ENCODE measurements at regions of chr19 and their contacts with region 1.

Region 1: DNA sequence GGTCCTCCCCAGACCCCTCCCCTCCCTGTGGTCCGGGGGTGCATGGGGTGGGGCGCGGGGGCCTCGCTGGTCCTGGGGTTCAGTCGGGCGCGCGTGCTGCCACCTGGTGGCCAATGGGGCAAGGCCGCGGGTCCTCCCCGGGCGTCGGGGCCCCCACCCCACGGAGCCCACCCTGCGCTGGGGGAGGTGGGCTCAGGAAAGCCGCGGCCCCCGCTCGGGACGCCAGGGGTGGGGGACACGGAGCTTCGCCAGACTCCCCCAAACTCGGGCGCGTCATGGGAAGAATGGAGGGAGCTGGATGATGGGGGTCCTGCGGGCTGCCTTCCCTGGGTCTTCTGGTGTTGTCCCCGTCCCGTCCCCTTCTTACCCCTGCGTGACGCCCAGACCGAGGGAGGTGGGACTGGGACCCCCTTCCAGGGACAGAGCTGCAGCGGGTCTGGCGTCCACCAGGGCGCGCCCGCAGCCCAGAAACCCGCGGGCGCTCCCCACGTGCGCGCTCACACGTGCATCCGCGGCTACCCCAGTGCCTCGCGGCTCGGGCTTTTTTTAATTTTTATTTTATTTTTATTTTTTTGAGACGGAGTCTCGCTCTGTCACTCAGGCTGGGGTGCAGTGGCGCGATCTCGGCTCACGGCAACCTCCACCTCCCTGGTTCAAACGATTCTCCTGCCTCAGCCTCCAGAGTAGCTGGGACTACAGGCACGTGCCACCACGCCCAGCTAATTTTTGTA is 19.8 kb upstream of the TCF3 start:
- DNase-seq: peak; percentile 75
- ATAC-seq: peak; percentile 20
- H3K4me3 ChIP-seq: peak overlapping the region in 4 of 5 experiments; percentile 43 to 64 (median 54)
- H3K4me3 Mint-ChIP-seq: peak overlapping the region; percentile 81
- H3K27ac ChIP-seq: no peak overlapping the region
- H3K27ac Mint-ChIP-seq: peak overlapping the region; percentile 59
- H3K4me1 ChIP-seq: peaks cover 28 to 54% of the 10 kb centered on the region in 2 donors
- H3K4me1 Mint-ChIP-seq: peaks cover 37% of the 10 kb centered on the region
- H3K27me3 ChIP-seq: peaks cover 0 to 41% (median 27%) of the 10 kb centered on the region in 4 experiments
- H3K27me3 Mint-ChIP-seq: peaks cover 24% of the 10 kb centered on the region
- CTCF ChIP-seq: peak; percentile 93

Region 2: DNA sequence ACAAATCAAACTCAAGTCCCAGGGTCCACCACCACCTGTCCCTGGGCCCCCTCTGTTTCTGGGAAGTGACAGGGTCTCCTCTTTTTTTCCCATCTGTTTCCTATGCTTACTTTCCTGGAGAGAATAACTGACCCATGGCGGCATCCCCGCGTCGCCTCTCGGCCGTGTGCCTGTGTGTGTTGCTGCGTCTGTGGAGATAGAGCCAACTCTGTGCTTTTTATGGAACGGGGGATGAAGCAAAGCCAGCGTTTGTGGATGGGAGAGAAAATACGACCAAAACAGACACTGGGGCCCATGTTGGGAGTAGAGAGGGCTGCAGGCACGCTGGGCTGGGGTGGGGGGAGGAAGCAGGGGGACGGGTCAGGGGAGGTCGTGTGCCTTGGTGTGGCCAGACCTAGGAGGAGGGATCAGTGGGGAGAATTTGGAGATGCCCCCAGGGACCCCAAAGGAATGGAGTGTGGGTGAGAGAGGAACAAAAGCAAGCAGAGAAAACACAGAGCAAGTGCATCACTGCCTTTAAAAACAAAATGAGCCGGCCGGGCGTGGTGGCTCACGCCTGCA is 131.8 kb before region 1 on chr19:
- CTCF ChIA-PET with region 1: interaction called, 43 read pairs
- POLR2A ChIA-PET with region 1: no interaction called
- intact Hi-C with region 1: no loop called
- DNase-seq: no peak
- ATAC-seq: no peak
- H3K4me3 ChIP-seq: no peak overlapping the region
- H3K4me3 Mint-ChIP-seq: no peak overlapping the region
- H3K27ac ChIP-seq: no peak overlapping the region
- H3K27ac Mint-ChIP-seq: no peak overlapping the region
- H3K4me1 ChIP-seq: no peaks in the 10 kb centered on the region
- H3K4me1 Mint-ChIP-seq: no peaks in the 10 kb centered on the region
- H3K27me3 ChIP-seq: peaks cover 0 to 25% (median 3%) of the 10 kb centered on the region in 4 experiments
- H3K27me3 Mint-ChIP-seq: peaks cover 17% of the 10 kb centered on the region
- CTCF ChIP-seq: no peak

Region 3: GRCh38 chr19:1605236-1606137 is 66.7 kb before region 1 on chr19 and contains the start of gene UQCR11:
- CTCF ChIA-PET with region 1: interaction called, 24 read pairs
- POLR2A ChIA-PET with region 1: interaction called, 6 read pairs
- intact Hi-C with region 1: loop called (anchors 1 kb)
- DNase-seq: peak; percentile 95
- ATAC-seq: peak; percentile 91
- H3K4me3 ChIP-seq: peak within 1 kb of the TSS; percentile 86 to 99 (median 98)
- H3K4me3 Mint-ChIP-seq: peak within 1 kb of the TSS; percentile 96
- H3K27ac ChIP-seq: peak within 1 kb of the TSS; percentile 61 to 86
- H3K27ac Mint-ChIP-seq: peak within 1 kb of the TSS; percentile 97
- H3K4me1 ChIP-seq: peaks cover 31 to 45% of the 10 kb centered on the region in 2 donors
- H3K4me1 Mint-ChIP-seq: peaks cover 45% of the 10 kb centered on the region
- H3K27me3 ChIP-seq: no peaks in the 10 kb centered on the region
- H3K27me3 Mint-ChIP-seq: no peaks in the 10 kb centered on the region
- CTCF ChIP-seq: peak; percentile 50
- total RNA-seq, gene UQCR11: 66.8 and 73.7 TPM in 2 replicates

Region 4: GRCh38 chr19:1634242-1634937 is 37.8 kb before region 1 on chr19:
- CTCF ChIA-PET with region 1: interaction called, 7 read pairs
- POLR2A ChIA-PET with region 1: no interaction called
- intact Hi-C with region 1: loop called (anchors 5 kb)
- DNase-seq: no peak
- ATAC-seq: no peak
- H3K4me3 ChIP-seq: no peak overlapping the region
- H3K4me3 Mint-ChIP-seq: no peak overlapping the region
- H3K27ac ChIP-seq: no peak overlapping the region
- H3K27ac Mint-ChIP-seq: no peak overlapping the region
- H3K4me1 ChIP-seq: no peaks in the 10 kb centered on the region
- H3K4me1 Mint-ChIP-seq: peaks cover 7% of the 10 kb centered on the region
- H3K27me3 ChIP-seq: no peaks in the 10 kb centered on the region
- H3K27me3 Mint-ChIP-seq: no peaks in the 10 kb centered on the region
- CTCF ChIP-seq: no peak

Region 5: DNA sequence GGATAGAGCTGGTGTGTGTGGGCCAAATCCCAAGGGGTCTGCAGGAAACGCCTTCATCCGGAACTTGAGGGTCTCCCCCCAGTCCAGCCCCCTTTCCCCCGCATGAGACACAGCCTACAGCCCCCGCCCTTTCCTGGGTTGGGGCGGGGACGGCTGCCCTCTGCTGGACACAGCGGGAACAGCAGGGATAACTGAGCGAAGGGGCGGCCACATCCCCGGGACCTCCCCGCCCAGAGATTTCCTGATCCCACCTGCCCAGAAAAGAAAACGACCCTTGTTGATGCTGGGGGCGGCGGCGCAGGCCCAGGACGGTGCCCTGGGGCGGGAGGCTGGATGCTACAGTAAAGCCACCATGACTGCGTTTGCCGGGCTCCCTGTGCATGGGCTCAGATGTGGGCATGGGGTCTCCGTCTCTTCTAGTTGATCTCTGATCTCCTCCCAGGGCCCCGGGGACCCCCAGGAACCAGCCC is 95.3 kb after region 1 on chr19:
- CTCF ChIA-PET with region 1: interaction called, 28 read pairs
- POLR2A ChIA-PET with region 1: no interaction called
- intact Hi-C with region 1: loop called (anchors 1 kb)
- DNase-seq: peak; percentile 76
- ATAC-seq: peak; percentile 84
- H3K4me3 ChIP-seq: no peak overlapping the region
- H3K4me3 Mint-ChIP-seq: no peak overlapping the region
- H3K27ac ChIP-seq: no peak overlapping the region
- H3K27ac Mint-ChIP-seq: no peak overlapping the region
- H3K4me1 ChIP-seq: peaks cover 16 to 34% of the 10 kb centered on the region in 2 donors
- H3K4me1 Mint-ChIP-seq: peaks cover 4% of the 10 kb centered on the region
- H3K27me3 ChIP-seq: peaks cover 0 to 89% (median 69%) of the 10 kb centered on the region in 4 experiments
- H3K27me3 Mint-ChIP-seq: peaks cover 62% of the 10 kb centered on the region
- CTCF ChIP-seq: peak; percentile 93

Region 6: GRCh38 chr19:1825909-1826556 is 153.8 kb after region 1 on chr19:
- CTCF ChIA-PET with region 1: interaction called, 25 read pairs
- POLR2A ChIA-PET with region 1: no interaction called
- intact Hi-C with region 1: no loop called
- DNase-seq: peak; percentile 84
- ATAC-seq: peak; percentile 93
- H3K4me3 ChIP-seq: no peak overlapping the region
- H3K4me3 Mint-ChIP-seq: no peak overlapping the region
- H3K27ac ChIP-seq: no peak overlapping the region
- H3K27ac Mint-ChIP-seq: no peak overlapping the region
- H3K4me1 ChIP-seq: peaks cover 0 to 10% of the 10 kb centered on the region in 2 donors
- H3K4me1 Mint-ChIP-seq: peaks cover 4% of the 10 kb centered on the region
- H3K27me3 ChIP-seq: no peaks in the 10 kb centered on the region
- H3K27me3 Mint-ChIP-seq: no peaks in the 10 kb centered on the region
- CTCF ChIP-seq: peak; percentile 80